ENCODE measurements at regions of chr12 and their contacts with region 1.

Region 1: DNA sequence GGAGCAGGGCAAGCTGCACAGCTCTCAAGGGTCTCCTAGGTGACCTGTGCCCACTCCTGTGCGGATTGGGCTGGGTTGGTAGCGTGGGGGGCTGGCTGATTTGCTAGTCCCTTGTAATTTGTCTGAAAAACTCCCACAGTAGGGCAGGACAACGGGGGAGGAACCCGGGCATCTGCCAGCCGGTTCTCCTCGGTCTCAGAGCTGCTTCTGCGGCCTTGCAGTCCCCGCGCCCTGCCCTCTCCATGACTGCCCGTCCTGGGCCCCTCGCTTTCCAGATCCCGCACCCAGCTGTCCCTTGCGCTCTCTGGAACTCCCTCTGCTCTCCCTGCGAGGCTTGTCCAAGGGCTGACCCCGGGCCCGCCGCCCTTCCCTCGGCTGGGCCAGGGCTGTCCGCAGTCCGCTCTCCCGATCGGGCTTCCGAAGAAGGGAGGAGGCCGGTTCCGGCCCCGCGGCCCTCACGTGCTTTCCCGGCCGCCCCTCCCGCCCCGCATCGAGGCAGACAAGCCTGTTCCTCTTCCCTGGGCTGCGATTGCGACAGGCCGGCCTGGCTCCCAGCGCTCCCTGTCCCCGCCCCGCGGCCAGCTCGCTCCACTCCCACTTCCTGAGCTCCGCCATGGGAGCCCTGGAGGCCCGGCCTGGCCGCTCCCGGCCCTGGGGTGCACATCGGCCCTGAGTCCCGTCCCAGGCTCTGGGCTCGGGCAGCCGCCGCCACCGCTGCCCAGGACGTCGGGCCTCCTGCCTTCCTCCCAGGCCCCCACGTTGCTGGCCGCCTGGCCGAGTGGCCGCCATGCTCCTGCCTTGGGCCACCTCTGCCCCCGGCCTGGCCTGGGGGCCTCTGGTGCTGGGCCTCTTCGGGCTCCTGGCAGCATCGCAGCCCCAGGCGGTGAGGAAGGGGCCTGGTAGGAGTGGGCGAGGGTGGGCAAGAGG is at the start of gene LTBR:
- DNase-seq: peak; percentile 97
- H3K4me3 ChIP-seq: peak within 1 kb of the TSS; percentile 69 to 80 (median 76)
- H3K27ac ChIP-seq: peak within 1 kb of the TSS; percentile 95 to 98 (median 96)
- H3K4me1 ChIP-seq: peaks cover 37 to 70% (median 54%) of the 10 kb centered on the region in 4 donors
- H3K27me3 ChIP-seq: no peaks in the 10 kb centered on the region
- CTCF ChIP-seq: peak in 1 of 7 experiments; percentile 26
- EP300 ChIP-seq: no peak
- POLR2A ChIP-seq: peak in 2 of 4 donors; percentile 10 to 41
- total RNA-seq, gene LTBR: 27.5 to 471 (median 126) TPM

Region 2: DNA sequence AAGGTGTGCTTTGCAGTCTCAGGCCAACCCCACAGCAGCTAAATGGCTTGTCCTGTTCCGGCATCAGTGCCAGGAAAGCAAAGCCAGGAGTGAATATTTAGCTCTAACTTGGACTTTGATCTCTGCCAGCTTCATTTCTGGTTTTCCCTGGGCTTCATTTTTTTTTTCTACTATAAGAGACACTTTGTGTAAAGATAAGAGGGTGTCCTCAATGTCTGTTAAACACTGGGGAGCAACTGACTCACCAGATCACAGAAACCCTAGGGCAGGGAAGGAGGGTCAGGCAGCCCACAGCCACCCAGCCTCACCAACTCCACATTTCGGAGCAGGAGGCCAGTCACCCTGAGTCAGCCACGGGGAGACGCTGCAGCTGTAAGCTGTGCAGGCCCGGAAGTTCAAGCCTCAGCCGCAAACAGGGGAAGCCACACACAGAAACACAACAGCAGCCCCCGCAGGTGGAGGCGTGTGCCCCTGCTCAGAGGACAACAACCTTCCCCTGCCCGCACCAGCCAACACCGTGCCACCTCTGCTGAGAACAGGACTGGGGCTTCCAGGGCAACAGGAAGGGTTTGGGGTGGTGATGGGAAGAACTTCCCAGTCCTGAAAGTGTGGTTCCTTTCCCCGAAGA is 48.3 kb before region 1 on chr12:
- intact Hi-C with region 1: loop called (anchors 10 kb)
- DNase-seq: peak; percentile 81 to 92
- H3K4me3 ChIP-seq: peak overlapping the region; percentile 75 to 92 (median 82)
- H3K27ac ChIP-seq: peak overlapping the region; percentile 85 to 99 (median 97)
- H3K4me1 ChIP-seq: peaks cover 72 to 91% (median 85%) of the 10 kb centered on the region in 4 donors
- H3K27me3 ChIP-seq: no peaks in the 10 kb centered on the region
- CTCF ChIP-seq: peak in 4 of 7 experiments; percentile 36 to 58 (median 48)
- EP300 ChIP-seq: no peak
- POLR2A ChIP-seq: no peak

Region 3: DNA sequence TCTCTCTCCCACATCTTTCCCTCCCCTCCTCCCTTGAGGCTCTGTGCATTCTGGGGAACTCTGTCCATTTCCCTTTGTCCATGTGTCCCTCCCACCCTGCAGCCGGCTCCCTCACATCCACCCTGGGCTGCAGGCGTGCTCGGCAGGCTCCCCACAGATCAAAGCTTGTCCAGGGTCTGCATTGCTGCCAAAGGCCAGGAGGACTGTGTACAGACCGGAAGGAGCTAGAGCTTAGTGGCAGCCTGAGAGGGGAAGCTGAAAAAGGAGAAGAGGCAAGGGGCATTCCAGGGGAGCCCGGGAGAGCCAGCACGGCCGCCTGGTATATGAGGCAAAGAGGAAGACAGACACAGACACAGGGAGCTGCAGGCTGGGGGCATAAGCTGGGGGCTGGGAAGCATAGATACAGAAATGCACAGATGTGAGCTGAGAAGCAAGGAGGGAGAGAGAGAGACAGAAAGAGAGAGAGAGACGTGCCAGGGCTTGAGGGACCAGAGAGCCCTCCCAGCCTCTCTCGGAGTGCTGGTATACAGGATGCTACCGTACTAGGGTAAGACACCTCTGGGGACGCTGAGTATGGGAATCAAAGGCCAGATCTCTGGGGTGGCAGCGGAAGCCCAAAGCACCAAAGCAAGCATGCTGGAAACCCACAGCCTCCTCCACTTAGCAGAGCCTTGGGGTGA is 408.8 kb after region 1 on chr12:
- intact Hi-C with region 1: no loop called
- DNase-seq: peak in 1 of 2 donors; percentile 72
- H3K4me3 ChIP-seq: peak overlapping the region in 2 of 4 donors; percentile 10 to 24
- H3K27ac ChIP-seq: peak overlapping the region in 3 of 5 donors; percentile 24 to 66 (median 56)
- H3K4me1 ChIP-seq: peaks cover 0 to 15% (median 3%) of the 10 kb centered on the region in 4 donors
- H3K27me3 ChIP-seq: no peaks in the 10 kb centered on the region
- CTCF ChIP-seq: no peak
- EP300 ChIP-seq: no peak
- POLR2A ChIP-seq: no peak